Common myeloid progenitor, CD34-positive (primary cell): ENCODE measurements at regions of chr1 and their contacts with region 1.

Region 1: GRCh38 chr1:207897188-207897587 is 13.7 kb downstream of the CD34 start:
- DNase-seq: peak; percentile 51 to 65 (median 61)
- H3K4me3 ChIP-seq: no peak overlapping the region
- H3K27ac ChIP-seq: peak overlapping the region in 1 of 2 experiments; percentile 5
- H3K4me1 ChIP-seq: peaks cover 13 to 75% (median 46%) of the 10 kb centered on the region in 4 experiments
- H3K27me3 ChIP-seq: no peaks in the 10 kb centered on the region

Region 2: GRCh38 chr1:207740224-207740623 is 157.0 kb before region 1 on chr1:
- CTCF ChIA-PET with region 1: no interaction called
- POLR2A ChIA-PET with region 1: no interaction called
- DNase-seq: no peak
- H3K4me3 ChIP-seq: no peak overlapping the region
- H3K27ac ChIP-seq: no peak overlapping the region
- H3K4me1 ChIP-seq: peaks cover 0 to 5% (median 0%) of the 10 kb centered on the region in 4 experiments
- H3K27me3 ChIP-seq: no peaks in the 10 kb centered on the region

Region 3: DNA sequence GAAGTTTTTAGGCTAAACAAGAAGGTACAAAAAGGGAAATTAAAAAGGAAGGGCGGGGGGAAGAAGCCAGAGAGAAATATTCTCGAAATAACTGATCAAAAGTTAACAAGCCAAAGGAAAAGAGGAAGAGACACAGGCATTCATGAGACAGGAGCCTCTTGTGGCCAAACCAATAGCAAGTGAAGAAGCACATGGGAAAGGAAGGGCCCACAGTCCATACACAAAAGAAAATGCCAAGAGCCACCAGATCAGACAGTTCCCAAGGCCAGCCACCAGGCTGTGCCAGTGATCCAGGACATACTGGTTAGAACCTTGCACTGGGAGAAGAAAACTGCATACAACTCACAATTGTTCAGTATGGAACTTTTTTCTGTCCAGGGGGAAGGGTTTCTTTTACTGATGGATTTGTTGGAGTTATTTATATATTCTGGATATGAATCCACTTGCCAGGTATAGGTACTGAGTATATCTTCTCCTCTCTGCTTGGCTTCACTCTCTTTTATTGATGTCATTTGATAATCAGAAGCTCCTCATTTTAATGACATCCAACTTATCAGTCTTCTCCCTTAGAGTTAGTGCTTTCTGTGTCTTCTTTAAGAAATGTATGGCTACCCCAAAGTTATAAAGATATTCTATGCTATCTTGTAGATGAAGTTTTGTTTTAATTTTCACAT is 68.6 kb before region 1 on chr1:
- CTCF ChIA-PET with region 1: interaction called, 15 read pairs
- POLR2A ChIA-PET with region 1: interaction called, 3 read pairs
- DNase-seq: peak; percentile 96
- H3K4me3 ChIP-seq: peak overlapping the region in 1 of 7 experiments; percentile 30
- H3K27ac ChIP-seq: peak overlapping the region in 1 of 2 experiments; percentile 37
- H3K4me1 ChIP-seq: peaks cover 54 to 92% (median 87%) of the 10 kb centered on the region in 4 experiments
- H3K27me3 ChIP-seq: no peaks in the 10 kb centered on the region

Region 4: GRCh38 chr1:207876131-207876530 is 21.1 kb before region 1 on chr1:
- CTCF ChIA-PET with region 1: interaction called, 157 read pairs
- POLR2A ChIA-PET with region 1: no interaction called
- DNase-seq: no peak
- H3K4me3 ChIP-seq: no peak overlapping the region
- H3K27ac ChIP-seq: no peak overlapping the region
- H3K4me1 ChIP-seq: peaks cover 26 to 60% (median 46%) of the 10 kb centered on the region in 4 experiments
- H3K27me3 ChIP-seq: no peaks in the 10 kb centered on the region

Region 5: GRCh38 chr1:207910591-207911354 is 13.6 kb after region 1 on chr1 and contains the start of gene CD34:
- CTCF ChIA-PET with region 1: interaction called, 96 read pairs
- POLR2A ChIA-PET with region 1: no interaction called
- DNase-seq: peak in 2 of 3 donors; percentile 63 to 77
- H3K4me3 ChIP-seq: peak within 1 kb of the TSS; percentile 76 to 90 (median 81)
- H3K27ac ChIP-seq: peak within 1 kb of the TSS; percentile 78 to 85
- H3K4me1 ChIP-seq: peaks cover 41 to 87% (median 73%) of the 10 kb centered on the region in 4 experiments
- H3K27me3 ChIP-seq: no peaks in the 10 kb centered on the region

Region 6: GRCh38 chr1:207919523-207920170 is 22.5 kb after region 1 on chr1:
- CTCF ChIA-PET with region 1: interaction called, 15 read pairs
- POLR2A ChIA-PET with region 1: interaction called, 4 read pairs
- DNase-seq: peak in 2 of 3 donors; percentile 52 to 69
- H3K4me3 ChIP-seq: peak overlapping the region in 3 of 7 experiments; percentile 2 to 60 (median 12)
- H3K27ac ChIP-seq: no peak overlapping the region
- H3K4me1 ChIP-seq: peaks cover 47 to 90% (median 78%) of the 10 kb centered on the region in 4 experiments
- H3K27me3 ChIP-seq: no peaks in the 10 kb centered on the region

Region 7: GRCh38 chr1:207952617-207953542 is 55.7 kb after region 1 on chr1:
- CTCF ChIA-PET with region 1: interaction called, 494 read pairs
- POLR2A ChIA-PET with region 1: interaction called, 6 read pairs
- DNase-seq: no peak
- H3K4me3 ChIP-seq: no peak overlapping the region
- H3K27ac ChIP-seq: no peak overlapping the region
- H3K4me1 ChIP-seq: peaks cover 0 to 26% (median 13%) of the 10 kb centered on the region in 4 experiments
- H3K27me3 ChIP-seq: no peaks in the 10 kb centered on the region

Region 8: DNA sequence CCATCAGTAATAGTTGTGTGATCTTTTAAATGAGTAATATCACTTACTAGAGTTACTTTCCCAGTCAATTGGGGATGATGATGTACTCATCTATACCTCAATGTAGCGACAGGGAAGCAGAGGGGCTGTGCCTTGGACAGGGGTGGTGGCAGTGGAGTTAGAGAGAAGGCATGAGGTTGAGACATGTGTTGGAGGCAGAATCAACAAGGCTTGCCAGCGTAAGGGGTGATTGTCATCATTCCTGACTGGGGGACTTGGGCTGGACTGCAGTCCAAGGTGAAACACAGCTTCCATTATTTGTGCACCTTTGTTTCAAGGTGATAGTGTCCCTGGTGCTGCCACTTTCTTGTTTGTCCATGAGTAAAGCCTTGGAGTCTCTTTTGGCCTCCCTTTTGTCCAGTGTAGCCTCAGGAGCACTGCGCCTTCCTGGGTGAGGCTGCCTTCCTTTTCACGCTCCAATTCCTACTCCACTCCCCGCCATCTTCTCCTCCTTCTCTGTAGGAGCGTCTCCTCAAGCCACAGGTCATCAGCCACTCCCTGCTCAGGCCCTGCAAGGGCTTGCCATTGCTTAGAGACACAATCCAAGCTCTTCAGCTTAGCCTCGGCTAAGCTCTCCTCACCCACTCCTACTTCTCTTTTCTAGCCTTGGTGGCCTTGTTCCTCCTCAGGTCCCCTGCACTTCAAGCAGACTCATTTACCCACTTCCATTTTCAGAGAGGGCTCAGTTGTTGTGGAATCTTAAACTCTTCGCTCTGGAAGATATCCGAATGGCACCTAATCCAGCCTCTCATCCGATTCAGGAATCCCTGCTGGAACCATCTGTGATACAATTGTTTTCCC is 91.4 kb after region 1 on chr1:
- CTCF ChIA-PET with region 1: no interaction called
- POLR2A ChIA-PET with region 1: no interaction called
- DNase-seq: no peak
- H3K4me3 ChIP-seq: no peak overlapping the region
- H3K27ac ChIP-seq: no peak overlapping the region
- H3K4me1 ChIP-seq: no peaks in the 10 kb centered on the region
- H3K27me3 ChIP-seq: no peaks in the 10 kb centered on the region

Region 9: GRCh38 chr1:208054485-208054884 is 157.3 kb after region 1 on chr1:
- CTCF ChIA-PET with region 1: no interaction called
- POLR2A ChIA-PET with region 1: no interaction called
- DNase-seq: no peak
- H3K4me3 ChIP-seq: no peak overlapping the region
- H3K27ac ChIP-seq: no peak overlapping the region
- H3K4me1 ChIP-seq: no peaks in the 10 kb centered on the region
- H3K27me3 ChIP-seq: peaks cover 0 to 2% (median 0%) of the 10 kb centered on the region in 5 experiments

Region 10: DNA sequence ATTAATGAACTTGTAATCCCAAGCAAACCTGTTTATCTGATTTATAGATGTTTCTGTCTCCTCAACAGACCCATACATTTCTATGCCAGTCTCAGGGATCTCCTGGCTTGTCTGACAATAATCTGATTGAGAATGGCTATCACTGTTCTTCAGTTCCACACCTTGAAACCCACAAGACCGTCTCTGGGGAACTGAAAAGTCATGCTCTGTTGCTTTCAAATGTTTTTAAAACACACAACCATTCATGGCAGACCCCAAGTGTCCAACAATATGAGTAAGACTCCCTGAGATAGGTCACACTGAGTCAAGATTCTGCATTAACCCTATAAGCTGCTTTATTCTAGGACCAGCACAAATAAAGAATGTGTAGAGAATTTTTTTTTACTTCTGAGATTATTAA is 958.2 kb after region 1 on chr1:
- CTCF ChIA-PET with region 1: no interaction called
- POLR2A ChIA-PET with region 1: no interaction called
- DNase-seq: no peak
- H3K4me3 ChIP-seq: no peak overlapping the region
- H3K27ac ChIP-seq: no peak overlapping the region
- H3K4me1 ChIP-seq: no peaks in the 10 kb centered on the region
- H3K27me3 ChIP-seq: no peaks in the 10 kb centered on the region